Mammary epithelial cell (primary cell): ENCODE measurements at regions of chr17 and their contacts with region 1.

Region 1: GRCh38 chr17:2433696-2434095 is 32.8 kb upstream of the MNT start:
- DNase-seq: peak; percentile 38
- H3K4me3 ChIP-seq: no peak overlapping the region
- H3K27ac ChIP-seq: no peak overlapping the region
- H3K4me1 ChIP-seq: no peaks in the 10 kb centered on the region
- H3K27me3 ChIP-seq: no peaks in the 10 kb centered on the region
- CTCF ChIP-seq: no peak

Region 2: GRCh38 chr17:2474371-2474770 is 40.7 kb after region 1 on chr17:
- CTCF ChIA-PET with region 1: no interaction called
- dilution Hi-C with region 1: loop called (anchors 5 kb)
- in situ Hi-C with region 1: no loop called
- intact Hi-C with region 1: no loop called
- DNase-seq: no peak
- H3K4me3 ChIP-seq: no peak overlapping the region
- H3K27ac ChIP-seq: no peak overlapping the region
- H3K4me1 ChIP-seq: no peaks in the 10 kb centered on the region
- H3K27me3 ChIP-seq: no peaks in the 10 kb centered on the region
- CTCF ChIP-seq: no peak